ENCODE measurements at regions of chr1 and their contacts with region 1.

Region 1: GRCh38 chr1:16960560-16961296 is 19.7 kb downstream of the MFAP2 start:
- DNase-seq: peak; percentile 87
- H3K4me3 ChIP-seq: peak overlapping the region; percentile 46 to 54
- H3K27ac ChIP-seq: peak overlapping the region in 1 of 2 experiments; percentile 41; a peak in 1 of 4 replicates
- H3K4me1 ChIP-seq: peaks cover 0 to 3% of the 10 kb centered on the region in 2 experiments; a peak in 1 of 4 replicates
- H3K27me3 ChIP-seq: no peaks in the 10 kb centered on the region
- CTCF ChIP-seq: peak; percentile 67
- EP300 ChIP-seq: no peak
- RAD21 ChIP-seq: 0 out of 2 replicates have a peak, but pooled peaks have one; percentile 24

Region 2: DNA sequence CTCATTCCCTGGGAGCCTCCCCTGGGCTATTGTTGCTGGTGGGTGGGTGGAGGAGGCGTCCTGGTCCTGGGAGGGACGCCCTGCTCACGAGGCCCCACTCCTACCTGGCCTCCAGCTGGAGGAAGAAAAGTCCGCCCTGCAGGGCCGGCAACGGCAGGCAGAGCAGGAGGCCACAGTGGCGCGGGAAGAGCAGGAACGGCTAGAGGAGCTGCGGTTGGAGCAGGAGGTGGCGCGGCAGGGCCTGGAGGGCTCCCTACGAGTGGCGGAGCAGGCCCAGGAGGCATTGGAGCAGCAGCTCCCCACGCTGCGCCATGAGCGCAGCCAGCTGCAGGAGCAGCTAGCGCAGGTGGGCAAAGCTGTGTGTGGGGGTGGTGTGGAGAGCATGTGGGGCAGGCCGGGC is 14.1 kb before region 1 on chr1:
- CTCF ChIA-PET with region 1: interaction called, 66 read pairs
- POLR2A ChIA-PET with region 1: no interaction called
- DNase-seq: no peak
- H3K4me3 ChIP-seq: no peak overlapping the region
- H3K27ac ChIP-seq: no peak overlapping the region
- H3K4me1 ChIP-seq: no peaks in the 10 kb centered on the region; a peak in 1 of 4 replicates
- H3K27me3 ChIP-seq: no peaks in the 10 kb centered on the region
- CTCF ChIP-seq: no peak
- EP300 ChIP-seq: no peak
- RAD21 ChIP-seq: no peak

Region 3: GRCh38 chr1:16978567-16979474 is 18.1 kb after region 1 on chr1:
- CTCF ChIA-PET with region 1: interaction called, 32 read pairs
- POLR2A ChIA-PET with region 1: interaction called, 39 read pairs
- DNase-seq: peak; percentile 96
- H3K4me3 ChIP-seq: peak overlapping the region; percentile 62 to 76
- H3K27ac ChIP-seq: peak overlapping the region; percentile 87 to 97
- H3K4me1 ChIP-seq: peaks cover 21 to 45% of the 10 kb centered on the region in 2 experiments; a peak in 2 of 4 replicates
- H3K27me3 ChIP-seq: no peaks in the 10 kb centered on the region
- CTCF ChIP-seq: no peak
- EP300 ChIP-seq: peak; percentile 58 to 73; a peak in 3 of 4 replicates
- RAD21 ChIP-seq: no peak

Region 4: GRCh38 chr1:16984717-16985116 is 24.0 kb after region 1 on chr1:
- CTCF ChIA-PET with region 1: interaction called, 38 read pairs
- POLR2A ChIA-PET with region 1: interaction called, 39 read pairs
- DNase-seq: peak; percentile 76
- H3K4me3 ChIP-seq: no peak overlapping the region
- H3K27ac ChIP-seq: peak overlapping the region; percentile 64 to 79
- H3K4me1 ChIP-seq: peaks cover 13 to 14% of the 10 kb centered on the region in 2 experiments; a peak in 2 of 4 replicates
- H3K27me3 ChIP-seq: no peaks in the 10 kb centered on the region
- CTCF ChIP-seq: no peak
- EP300 ChIP-seq: peak; percentile 25 to 62; a peak in 2 of 4 replicates
- RAD21 ChIP-seq: no peak

Region 5: DNA sequence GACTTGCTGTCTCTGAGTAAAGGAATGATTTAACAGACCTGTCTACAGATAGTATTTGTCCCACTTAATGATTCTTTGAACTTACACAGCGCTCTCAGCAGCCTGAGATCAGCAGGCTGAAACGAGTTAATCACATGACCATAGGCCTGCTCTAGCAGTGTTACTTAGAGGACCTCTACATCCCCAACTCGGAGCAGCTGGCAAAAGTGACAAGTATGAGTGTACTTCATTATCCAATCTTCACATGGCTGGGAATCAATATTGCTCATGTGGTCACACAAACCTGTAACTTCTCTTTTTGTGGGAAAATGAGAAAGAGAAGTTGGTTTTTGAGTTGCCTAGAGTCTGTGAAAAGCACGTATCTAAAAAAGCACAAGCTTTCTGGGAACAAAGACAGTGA is 62.4 kb after region 1 on chr1:
- CTCF ChIA-PET with region 1: interaction called, 13 read pairs
- POLR2A ChIA-PET with region 1: no interaction called
- DNase-seq: no peak
- H3K4me3 ChIP-seq: no peak overlapping the region
- H3K27ac ChIP-seq: no peak overlapping the region
- H3K4me1 ChIP-seq: no peaks in the 10 kb centered on the region
- H3K27me3 ChIP-seq: no peaks in the 10 kb centered on the region
- CTCF ChIP-seq: no peak
- EP300 ChIP-seq: no peak
- RAD21 ChIP-seq: no peak

Region 6: GRCh38 chr1:17053685-17054410 is 93.1 kb after region 1 on chr1 and contains the start of gene SDHB:
- CTCF ChIA-PET with region 1: interaction called, 408 read pairs
- POLR2A ChIA-PET with region 1: no interaction called
- DNase-seq: peak; percentile 97
- H3K4me3 ChIP-seq: peak within 1 kb of the TSS; percentile 87 to 96
- H3K27ac ChIP-seq: peak within 1 kb of the TSS; percentile 50 to 78
- H3K4me1 ChIP-seq: peaks cover 8 to 11% of the 10 kb centered on the region in 2 experiments; a peak in 3 of 4 replicates
- H3K27me3 ChIP-seq: peaks cover 7% of the 10 kb centered on the region; the same call in 1 of the 2 replicates
- CTCF ChIP-seq: no peak
- EP300 ChIP-seq: no peak
- RAD21 ChIP-seq: no peak
- polyA plus RNA-seq, gene SDHB: 128 and 139 TPM in 2 replicates